ENCODE measurements at regions of chr11 and their contacts with region 1.

Region 1: DNA sequence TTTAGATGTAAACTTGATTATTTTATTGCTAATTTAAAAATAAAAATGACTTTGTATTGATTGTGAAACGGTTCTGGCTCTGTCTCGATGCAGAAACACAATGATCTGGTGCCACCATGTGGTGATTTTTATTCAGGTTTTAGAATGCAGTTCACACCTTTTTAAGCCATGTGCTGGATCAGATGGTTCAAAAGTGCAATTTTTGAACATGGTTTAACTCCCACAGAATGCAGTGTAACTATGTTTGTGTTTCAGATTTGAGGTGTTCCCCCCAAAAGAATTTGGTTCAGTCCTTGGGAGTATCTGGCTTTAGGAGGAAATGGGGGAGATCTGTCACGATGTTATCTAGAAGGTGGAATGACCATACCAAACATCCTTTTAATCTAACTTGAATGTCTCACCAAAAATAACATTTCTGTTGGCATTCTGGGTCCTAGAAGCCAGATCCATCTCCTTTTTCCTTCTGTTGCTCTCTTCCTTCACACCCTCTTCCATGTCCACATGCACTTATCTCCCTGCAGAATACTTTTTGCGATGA is 7.9 kb downstream of the MRPL16 start:
- DNase-seq: no peak
- ATAC-seq: peak; percentile 48
- H3K4me3 Mint-ChIP-seq: no peak overlapping the region
- H3K27ac Mint-ChIP-seq: no peak overlapping the region
- H3K4me1 Mint-ChIP-seq: peaks cover 4% of the 10 kb centered on the region; the same call in 1 of the 2 replicates
- H3K27me3 Mint-ChIP-seq: no peaks in the 10 kb centered on the region
- CTCF ChIP-seq: peak; percentile 23; the same call in 1 of the 2 replicates

Region 2: GRCh38 chr11:59815754-59816153 is 13.0 kb after region 1 on chr11:
- CTCF ChIA-PET with region 1: interaction called, 10 read pairs
- POLR2A ChIA-PET with region 1: interaction called, 3 read pairs
- DNase-seq: no peak
- ATAC-seq: peak; percentile 71
- H3K4me3 Mint-ChIP-seq: peak overlapping the region; percentile 61
- H3K27ac Mint-ChIP-seq: peak overlapping the region; percentile 90
- H3K4me1 Mint-ChIP-seq: peaks cover 80% of the 10 kb centered on the region
- H3K27me3 Mint-ChIP-seq: no peaks in the 10 kb centered on the region
- CTCF ChIP-seq: no peak